Activated T-helper 1 cell treated with anti-CD3 and anti-CD28 coated beads, Interleukin-12 subunit alpha, Interleukin-12 subunit beta, Interleukin-2, Interleukin-4 antibody, amounts not matched to agents 30 ng/mL and 10 ng/mL and 1 ng/mL, durations not matched to agents 14 hours and 24 hours and 36 hours (primary cell): ENCODE measurements at regions of chrX and their contacts with region 1.

Region 1: DNA sequence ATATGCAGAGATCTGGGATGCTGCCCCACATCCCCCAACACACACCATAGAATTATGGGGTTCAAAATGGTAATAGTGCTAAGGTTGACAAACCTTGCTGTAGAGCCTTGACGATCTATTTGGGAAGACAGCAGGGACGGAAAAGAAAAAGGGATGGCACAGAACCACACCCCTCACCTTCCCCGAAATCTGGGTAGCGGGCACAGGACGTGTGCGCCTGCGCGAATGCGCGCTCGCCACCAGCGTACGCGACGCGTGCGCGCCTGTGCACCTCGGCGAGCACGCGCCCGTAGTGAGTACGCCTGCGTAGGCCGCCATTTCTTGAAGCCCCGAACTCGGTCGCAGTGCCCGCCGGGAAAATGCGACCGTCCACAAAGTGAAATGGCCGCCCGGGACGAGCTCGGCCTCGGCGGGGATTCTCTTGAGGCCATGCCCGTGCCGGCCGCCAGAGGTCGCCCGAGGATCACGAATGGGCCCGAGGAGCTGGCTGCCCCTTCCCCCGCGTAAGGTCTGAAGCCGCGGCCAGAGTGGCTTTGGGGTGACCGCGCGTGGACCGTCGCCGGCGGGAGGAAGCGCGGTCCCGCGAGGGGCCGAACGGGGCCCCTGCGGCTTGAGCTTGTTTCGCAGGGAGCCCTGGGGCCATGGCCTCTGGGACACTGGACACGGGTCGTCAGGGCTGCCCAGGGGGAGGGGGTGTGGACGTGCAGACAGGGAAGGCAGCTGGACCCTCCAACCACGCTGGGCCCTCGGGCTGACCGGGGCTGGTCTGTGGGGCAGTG is 43.6 kb downstream of the ZNF185 start:
- DNase-seq: peak; percentile 85
- H3K4me3 Mint-ChIP-seq: peak overlapping the region; percentile 85
- H3K27ac Mint-ChIP-seq: peak overlapping the region; percentile 53
- H3K4me1 Mint-ChIP-seq: peaks cover 15% of the 10 kb centered on the region
- H3K27me3 Mint-ChIP-seq: no peaks in the 10 kb centered on the region

Region 2: DNA sequence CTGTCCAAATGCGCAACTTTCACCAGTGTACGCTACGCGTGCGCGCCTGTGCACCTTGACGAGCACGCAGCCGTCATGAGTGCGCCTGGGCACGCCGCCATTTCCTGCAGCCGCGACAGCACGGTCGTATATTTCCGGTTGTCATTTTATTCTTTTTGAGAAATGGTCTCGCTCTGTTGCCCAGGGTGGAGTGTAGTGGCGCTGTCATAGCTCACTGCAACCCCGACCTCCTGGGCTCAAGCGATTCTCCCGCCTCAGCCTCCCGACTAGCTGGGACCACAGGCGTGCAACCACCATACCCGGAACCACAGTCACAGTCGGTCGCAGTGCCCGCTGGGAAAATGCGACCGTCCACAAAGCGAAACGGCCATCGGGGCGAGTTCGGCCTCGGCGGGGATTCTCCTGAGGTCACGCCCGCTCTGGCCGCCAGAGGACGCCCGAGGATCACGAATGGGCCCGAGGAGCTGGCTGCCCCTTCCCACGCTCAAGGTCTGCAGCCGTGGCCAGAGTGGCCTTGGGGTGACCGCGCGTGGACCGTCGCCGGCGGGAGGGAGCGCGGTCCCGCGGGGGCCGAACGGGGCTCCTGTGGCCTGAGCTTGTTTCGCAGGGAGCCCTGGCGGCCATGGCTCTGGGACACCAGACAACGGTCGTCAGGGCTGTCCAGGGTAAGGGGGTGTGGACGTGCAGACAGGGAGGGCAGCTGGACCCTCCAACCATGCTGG is 91.0 kb after region 1 on chrX:
- intact Hi-C with region 1: loop called (anchors 2 kb)
- DNase-seq: peak; percentile 52
- H3K4me3 Mint-ChIP-seq: peak overlapping the region; percentile 78
- H3K27ac Mint-ChIP-seq: peak overlapping the region; percentile 77
- H3K4me1 Mint-ChIP-seq: no peaks in the 10 kb centered on the region
- H3K27me3 Mint-ChIP-seq: no peaks in the 10 kb centered on the region

Region 3: GRCh38 chrX:153102436-153102835 is 160.9 kb after region 1 on chrX:
- intact Hi-C with region 1: no loop called
- DNase-seq: no peak
- H3K4me3 Mint-ChIP-seq: no peak overlapping the region
- H3K27ac Mint-ChIP-seq: no peak overlapping the region
- H3K4me1 Mint-ChIP-seq: peaks cover 8% of the 10 kb centered on the region
- H3K27me3 Mint-ChIP-seq: no peaks in the 10 kb centered on the region

Region 4: DNA sequence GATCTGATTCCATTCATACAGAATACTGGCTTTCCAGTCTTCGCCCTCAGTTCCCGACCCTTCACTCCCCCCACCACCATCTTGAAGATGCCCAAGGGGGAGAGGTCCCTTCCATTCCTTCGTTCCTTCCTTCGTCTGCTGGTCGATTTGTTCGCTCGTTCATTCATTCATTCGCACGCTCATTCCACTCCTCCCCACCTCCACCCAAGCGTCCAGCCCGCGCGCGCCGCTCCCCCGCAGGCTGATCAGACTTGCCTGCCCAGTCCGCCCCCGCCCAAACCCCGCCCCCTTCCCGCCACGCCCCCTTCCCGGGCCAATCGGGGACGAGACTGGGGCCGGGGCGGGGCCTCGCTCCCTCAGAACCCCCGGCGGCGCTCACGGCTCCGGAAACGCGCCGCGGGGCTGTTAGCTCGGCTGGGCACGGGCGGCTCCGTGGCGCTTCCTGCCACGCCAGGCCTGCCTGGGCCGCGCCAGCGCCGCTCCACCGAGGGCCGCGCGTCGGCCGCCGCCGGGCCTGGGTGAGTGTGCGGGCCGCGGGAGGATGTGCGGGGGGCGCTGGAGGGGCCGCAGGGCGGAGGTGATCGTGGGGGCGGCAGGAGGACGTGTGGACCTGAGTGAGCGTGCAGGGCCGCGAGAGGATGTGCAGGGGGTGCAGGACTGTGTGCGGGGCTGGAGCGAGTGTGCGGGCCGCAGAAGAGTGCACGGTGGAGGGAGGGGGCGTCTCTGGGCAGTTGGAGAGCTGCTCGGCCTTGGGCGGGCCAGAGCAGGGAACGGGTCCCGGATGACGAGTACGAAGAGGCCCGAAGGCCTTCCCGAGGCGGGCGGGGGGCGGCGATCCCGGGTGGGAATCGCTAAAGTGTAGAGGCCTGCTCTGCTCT is 392.5 kb after region 1 on chrX and contains the start of gene ZNF275:
- intact Hi-C with region 1: loop called (anchors 1 kb)
- DNase-seq: peak; percentile 78
- H3K4me3 Mint-ChIP-seq: peak within 1 kb of the TSS; percentile 86
- H3K27ac Mint-ChIP-seq: peak within 1 kb of the TSS; percentile 90
- H3K4me1 Mint-ChIP-seq: peaks cover 49% of the 10 kb centered on the region
- H3K27me3 Mint-ChIP-seq: peaks cover 4% of the 10 kb centered on the region
- total RNA-seq, gene ZNF275: 22.1 and 22.5 TPM in 2 replicates

Region 5: GRCh38 chrX:153470435-153471363 is 529.2 kb after region 1 on chrX and contains the start of gene HAUS7:
- intact Hi-C with region 1: loop called (anchors 1 kb)
- DNase-seq: peak; percentile 81
- H3K4me3 Mint-ChIP-seq: peak within 1 kb of the TSS; percentile 85
- H3K27ac Mint-ChIP-seq: peak within 1 kb of the TSS; percentile 80
- H3K4me1 Mint-ChIP-seq: no peaks in the 10 kb centered on the region
- H3K27me3 Mint-ChIP-seq: peaks cover 2% of the 10 kb centered on the region
- total RNA-seq, gene HAUS7: 62.7 and 68.2 TPM in 2 replicates

Region 6: GRCh38 chrX:153507484-153508178 is 566.1 kb after region 1 on chrX:
- intact Hi-C with region 1: loop called (anchors 1 kb)
- DNase-seq: peak; percentile 70
- H3K4me3 Mint-ChIP-seq: no peak overlapping the region
- H3K27ac Mint-ChIP-seq: no peak overlapping the region
- H3K4me1 Mint-ChIP-seq: no peaks in the 10 kb centered on the region
- H3K27me3 Mint-ChIP-seq: no peaks in the 10 kb centered on the region

Region 7: DNA sequence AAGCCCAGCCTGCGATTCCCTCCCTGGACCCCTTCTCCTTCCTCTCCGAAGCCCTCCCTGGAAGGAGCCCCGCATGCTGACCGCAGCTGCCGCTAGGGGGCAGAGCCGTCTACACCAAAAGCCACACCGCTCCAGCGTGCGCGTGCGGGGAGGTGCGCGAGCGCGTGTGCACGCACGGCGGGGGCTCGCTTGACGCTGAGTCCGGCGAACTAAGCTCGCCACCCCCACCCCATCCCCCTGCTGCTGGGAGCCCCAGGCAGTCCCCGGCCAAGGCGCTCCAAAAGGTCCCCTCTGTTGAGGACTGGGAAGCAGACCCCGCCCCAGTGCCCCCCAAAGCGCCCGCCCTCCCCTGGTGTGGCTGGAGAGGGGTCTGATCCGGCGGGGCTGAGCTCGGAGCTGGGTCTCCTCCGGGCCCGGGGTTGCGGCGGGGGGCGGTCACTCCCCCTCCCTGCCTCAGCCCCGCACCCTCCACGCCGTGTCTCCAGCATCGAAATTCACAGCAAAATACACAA is 668.5 kb after region 1 on chrX:
- intact Hi-C with region 1: loop called (anchors 2 kb)
- DNase-seq: peak; percentile 58
- H3K4me3 Mint-ChIP-seq: peak overlapping the region; percentile 77
- H3K27ac Mint-ChIP-seq: peak overlapping the region; percentile 75
- H3K4me1 Mint-ChIP-seq: peaks cover 10% of the 10 kb centered on the region
- H3K27me3 Mint-ChIP-seq: peaks cover 15% of the 10 kb centered on the region

Region 8: GRCh38 chrX:153667956-153668396 is 726.5 kb after region 1 on chrX:
- intact Hi-C with region 1: loop called (anchors 2 kb)
- DNase-seq: peak; percentile 57
- H3K4me3 Mint-ChIP-seq: peak overlapping the region; percentile 79
- H3K27ac Mint-ChIP-seq: no peak overlapping the region
- H3K4me1 Mint-ChIP-seq: peaks cover 7% of the 10 kb centered on the region
- H3K27me3 Mint-ChIP-seq: peaks cover 8% of the 10 kb centered on the region